ENCODE measurements at regions of chr14 and their contacts with region 1.

Region 1: DNA sequence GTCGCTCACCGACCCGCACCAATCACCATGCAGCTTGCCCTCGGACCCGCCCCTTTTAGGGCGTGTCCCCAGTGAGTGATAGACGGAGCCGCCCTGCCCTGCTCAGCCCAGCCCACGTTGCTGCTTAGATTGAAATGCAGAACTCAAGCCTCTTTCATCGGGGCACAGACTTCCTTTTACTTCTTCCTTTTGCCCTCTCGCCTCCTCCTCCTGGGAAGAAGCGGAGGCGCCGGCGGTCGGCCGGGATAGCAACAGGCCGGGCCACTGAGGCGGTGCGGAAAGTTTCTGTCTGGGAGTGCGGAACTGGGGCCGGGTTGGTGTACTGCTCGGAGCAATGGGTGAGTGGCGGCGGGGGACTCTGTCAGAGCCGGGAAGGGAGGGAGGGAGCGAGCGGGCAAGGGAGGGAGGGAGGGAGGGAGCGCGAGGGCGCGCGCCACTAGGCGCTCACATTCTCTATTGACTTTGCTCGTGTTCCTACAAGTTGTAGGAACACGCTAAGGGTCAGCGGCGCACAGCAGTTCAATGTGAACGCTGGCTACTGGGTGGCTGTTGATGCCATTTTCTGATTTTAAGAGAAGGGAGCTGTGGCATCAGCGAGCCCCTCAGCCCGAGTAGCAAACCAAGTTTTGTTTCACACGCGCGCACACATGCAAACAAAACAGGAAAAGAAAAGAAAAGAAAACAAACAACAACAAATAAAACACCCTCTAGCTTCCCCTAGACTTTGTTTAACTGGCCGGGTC is at the start of gene PAX9:
- DNase-seq: peak in 1 of 10 donors; percentile 32
- H3K4me3 ChIP-seq: peak within 1 kb of the TSS in 36 of 59 donors; percentile 2 to 58 (median 29)
- H3K27ac ChIP-seq: no peak within 1 kb of the TSS
- H3K27me3 ChIP-seq: peaks cover 52 to 100% (median 100%) of the 10 kb centered on the region in 45 donors
- CTCF ChIP-seq: no peak
- total RNA-seq, gene PAX9: 0.08 to 0.76 (median 0.35) TPM in 7 of 120 experiments, not detected in the others

Region 2: GRCh38 chr14:36505892-36506731 is 155.8 kb before region 1 on chr14:
- intact Hi-C with region 1: no loop called
- DNase-seq: no peak
- H3K4me3 ChIP-seq: no peak overlapping the region
- H3K27ac ChIP-seq: no peak overlapping the region
- H3K27me3 ChIP-seq: peaks cover 26 to 100% (median 99%) of the 10 kb centered on the region in 45 donors
- CTCF ChIP-seq: no peak

Region 3: DNA sequence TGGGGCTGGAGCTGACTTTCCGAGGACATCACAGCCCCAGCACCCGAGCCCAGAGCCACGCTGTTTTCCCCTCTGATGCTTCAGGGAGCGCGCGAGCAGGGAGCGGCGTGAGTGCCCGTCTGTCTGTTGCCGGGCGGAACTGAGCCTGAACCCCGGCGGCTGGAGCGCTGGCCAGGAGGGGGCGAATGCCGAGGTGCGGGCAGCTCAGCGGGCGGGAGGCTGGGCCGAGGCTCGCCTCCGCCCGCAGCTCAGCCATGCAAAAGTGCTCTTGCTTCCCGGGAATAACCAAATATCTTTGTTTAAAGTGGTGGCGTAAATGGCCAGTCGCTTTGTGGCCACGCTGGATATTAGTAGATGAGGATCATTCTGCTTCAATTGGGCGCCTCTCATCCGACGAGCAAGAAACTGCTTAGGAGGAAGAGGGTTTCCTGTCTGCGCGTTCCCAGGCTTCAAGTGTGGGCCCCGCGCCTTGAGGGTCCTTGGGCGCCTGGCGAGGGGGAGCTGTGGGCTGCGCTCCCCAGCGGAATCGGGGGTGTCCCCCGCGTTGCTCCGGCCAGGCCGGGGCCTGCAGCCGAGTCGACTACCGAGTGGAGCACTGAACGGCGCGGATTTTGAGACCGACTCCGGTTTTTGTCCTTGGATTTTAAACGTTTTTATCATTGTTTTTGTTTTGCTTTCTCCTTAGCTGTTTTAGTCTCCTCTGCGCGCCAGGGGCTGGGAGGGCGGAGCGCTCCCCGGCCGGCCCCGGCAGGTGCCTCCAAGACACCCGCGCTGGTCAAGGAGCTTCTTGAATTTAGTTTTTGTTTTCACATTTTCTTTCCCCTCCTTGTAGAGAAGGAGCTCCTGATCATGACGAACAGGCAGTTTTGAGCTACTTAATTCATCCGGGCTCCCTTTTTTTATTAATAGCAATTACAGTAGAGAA is 141.1 kb before region 1 on chr14:
- intact Hi-C with region 1: loop called in 1 of 2 experiments (anchors 10 kb)
- DNase-seq: no peak
- H3K4me3 ChIP-seq: peak overlapping the region in 50 of 59 donors; percentile 2 to 60 (median 38)
- H3K27ac ChIP-seq: no peak overlapping the region
- H3K27me3 ChIP-seq: peaks cover 35 to 100% (median 100%) of the 10 kb centered on the region in 45 donors
- CTCF ChIP-seq: peak in 3 of 56 donors; percentile 7 to 14 (median 10)

Region 4: DNA sequence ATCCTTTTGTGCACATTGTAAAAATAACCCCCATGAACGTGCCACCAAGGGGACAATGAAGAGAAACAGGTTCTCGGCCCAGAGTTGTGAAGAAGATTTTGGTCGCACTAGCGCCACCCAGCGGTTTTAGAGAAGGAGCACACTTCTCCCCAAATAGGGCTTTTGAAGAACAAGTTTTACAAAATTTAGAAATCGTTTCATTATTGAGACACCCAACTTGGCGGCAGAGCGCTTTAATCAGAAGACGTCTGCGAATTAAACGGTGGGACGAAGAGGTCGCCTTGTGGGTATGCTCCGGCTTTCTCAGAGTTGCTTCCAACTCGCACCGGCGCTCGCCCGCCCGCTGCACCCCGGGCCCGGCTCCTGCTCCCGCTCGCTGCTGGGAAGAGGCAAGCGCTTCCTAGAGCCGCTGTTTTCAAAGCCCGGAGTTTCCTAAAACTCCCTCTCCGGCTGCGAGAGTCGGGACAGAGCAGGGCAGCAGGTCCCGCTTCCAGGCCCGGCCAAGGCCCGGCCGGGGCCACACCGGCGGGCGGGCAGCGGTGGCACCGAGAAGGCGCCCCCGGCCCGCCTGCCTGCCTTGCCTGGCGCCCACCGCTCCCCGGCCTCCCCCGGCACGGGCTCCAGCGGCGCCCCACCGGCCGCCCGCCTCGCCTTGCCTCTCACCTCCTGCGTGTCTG is 932.4 kb after region 1 on chr14:
- intact Hi-C with region 1: loop called in 1 of 2 experiments (anchors 10 kb)
- DNase-seq: no peak
- H3K4me3 ChIP-seq: peak overlapping the region in 47 of 59 donors; percentile 3 to 59 (median 36)
- H3K27ac ChIP-seq: no peak overlapping the region
- H3K27me3 ChIP-seq: peaks cover 25 to 99% (median 97%) of the 10 kb centered on the region in 45 donors
- CTCF ChIP-seq: peak in 54 of 56 donors; percentile 22 to 69 (median 51)

Measured in dorsolateral prefrontal cortex (tissue), 120 donors.